ENCODE measurements at regions of chr2 and their contacts with region 1.

Region 1: GRCh38 chr2:28413142-28413898 is 20.7 kb downstream of the FOSL2 start:
- DNase-seq: no peak
- ATAC-seq: peak; percentile 78
- H3K4me3 ChIP-seq: no peak overlapping the region
- H3K27ac ChIP-seq: no peak overlapping the region
- H3K4me1 ChIP-seq: no peaks in the 10 kb centered on the region
- H3K27me3 ChIP-seq: no peaks in the 10 kb centered on the region
- CTCF ChIP-seq: no peak

Region 2: GRCh38 chr2:27855476-27855875 is 557.8 kb before region 1 on chr2:
- CTCF ChIA-PET with region 1: no interaction called
- POLR2A ChIA-PET with region 1: interaction called, 15 read pairs
- in situ Hi-C with region 1: no loop called
- intact Hi-C with region 1: no loop called
- DNase-seq: peak; percentile 15
- ATAC-seq: no peak; the same call in 1 of the 2 replicates
- H3K4me3 ChIP-seq: no peak overlapping the region
- H3K27ac ChIP-seq: no peak overlapping the region
- H3K4me1 ChIP-seq: no peaks in the 10 kb centered on the region
- H3K27me3 ChIP-seq: no peaks in the 10 kb centered on the region
- CTCF ChIP-seq: no peak

Region 3: DNA sequence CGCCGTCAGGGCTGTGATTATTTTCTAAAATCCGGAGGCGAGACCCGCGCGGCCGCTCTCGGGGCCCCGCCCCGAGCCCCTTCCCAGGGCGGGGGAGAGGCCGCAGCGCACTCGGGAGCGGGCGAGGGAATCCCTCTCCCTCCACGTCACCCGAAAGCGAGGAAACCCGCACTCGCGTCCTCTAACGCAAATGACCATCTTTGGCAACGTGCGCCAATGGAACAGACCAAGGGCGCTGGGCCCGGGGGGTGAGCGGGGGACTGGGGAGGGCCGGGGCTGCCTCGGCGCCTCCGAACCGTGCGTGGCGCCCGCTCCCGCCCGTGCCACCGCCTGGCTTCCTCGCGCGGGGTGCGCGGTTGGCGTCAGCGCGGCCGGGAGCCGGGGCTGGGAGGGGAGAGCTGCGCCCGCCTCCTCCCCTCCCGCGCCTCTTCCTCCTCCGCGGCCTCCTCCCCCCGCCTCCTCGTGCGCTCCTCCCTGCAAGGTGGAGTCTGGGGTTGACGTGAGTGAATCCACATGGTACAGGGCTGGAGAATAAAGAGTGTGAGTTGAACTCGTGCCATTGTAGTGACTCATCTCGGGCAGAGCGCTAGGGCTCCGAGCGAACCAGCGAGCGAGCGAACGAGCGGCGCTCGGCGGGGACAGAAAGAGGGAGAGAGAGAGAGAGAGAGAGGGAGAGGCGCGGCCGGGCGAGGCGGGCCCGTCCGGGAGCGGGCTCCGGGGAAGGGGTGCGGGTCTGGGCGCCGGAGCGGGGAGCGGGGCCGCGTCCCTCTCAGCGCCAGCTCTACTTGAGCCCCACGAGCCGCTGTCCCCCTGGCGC is 20.8 kb before region 1 on chr2 and contains the start of gene FOSL2:
- CTCF ChIA-PET with region 1: no interaction called
- POLR2A ChIA-PET with region 1: no interaction called
- in situ Hi-C with region 1: no loop called
- intact Hi-C with region 1: no loop called
- DNase-seq: peak; percentile 98
- ATAC-seq: peak; percentile 77
- H3K4me3 ChIP-seq: peak within 1 kb of the TSS; percentile 69 to 85
- H3K27ac ChIP-seq: peak within 1 kb of the TSS; percentile 85
- H3K4me1 ChIP-seq: peaks cover 29% of the 10 kb centered on the region
- H3K27me3 ChIP-seq: no peaks in the 10 kb centered on the region
- CTCF ChIP-seq: peak; percentile 31
- total RNA-seq, gene FOSL2: 29.0 TPM

Measured in Panc1 (cell line).